Psoas muscle (tissue), 8 donors: ENCODE measurements at regions of chr17 and their contacts with region 1.

Region 1: GRCh38 chr17:47188876-47189731 is at the start of gene CDC27:
- DNase-seq: peak; percentile 98 to 99
- ATAC-seq: peak; percentile 95 to 97 (median 95)
- H3K4me3 ChIP-seq: peak within 1 kb of the TSS; percentile 72
- H3K27ac ChIP-seq: peak within 1 kb of the TSS; percentile 94
- H3K4me1 ChIP-seq: peaks cover 27% of the 10 kb centered on the region
- H3K27me3 ChIP-seq: no peaks in the 10 kb centered on the region
- CTCF ChIP-seq: no peak
- total RNA-seq, gene CDC27: 72.5 to 78.4 (median 74.9) TPM

Region 2: DNA sequence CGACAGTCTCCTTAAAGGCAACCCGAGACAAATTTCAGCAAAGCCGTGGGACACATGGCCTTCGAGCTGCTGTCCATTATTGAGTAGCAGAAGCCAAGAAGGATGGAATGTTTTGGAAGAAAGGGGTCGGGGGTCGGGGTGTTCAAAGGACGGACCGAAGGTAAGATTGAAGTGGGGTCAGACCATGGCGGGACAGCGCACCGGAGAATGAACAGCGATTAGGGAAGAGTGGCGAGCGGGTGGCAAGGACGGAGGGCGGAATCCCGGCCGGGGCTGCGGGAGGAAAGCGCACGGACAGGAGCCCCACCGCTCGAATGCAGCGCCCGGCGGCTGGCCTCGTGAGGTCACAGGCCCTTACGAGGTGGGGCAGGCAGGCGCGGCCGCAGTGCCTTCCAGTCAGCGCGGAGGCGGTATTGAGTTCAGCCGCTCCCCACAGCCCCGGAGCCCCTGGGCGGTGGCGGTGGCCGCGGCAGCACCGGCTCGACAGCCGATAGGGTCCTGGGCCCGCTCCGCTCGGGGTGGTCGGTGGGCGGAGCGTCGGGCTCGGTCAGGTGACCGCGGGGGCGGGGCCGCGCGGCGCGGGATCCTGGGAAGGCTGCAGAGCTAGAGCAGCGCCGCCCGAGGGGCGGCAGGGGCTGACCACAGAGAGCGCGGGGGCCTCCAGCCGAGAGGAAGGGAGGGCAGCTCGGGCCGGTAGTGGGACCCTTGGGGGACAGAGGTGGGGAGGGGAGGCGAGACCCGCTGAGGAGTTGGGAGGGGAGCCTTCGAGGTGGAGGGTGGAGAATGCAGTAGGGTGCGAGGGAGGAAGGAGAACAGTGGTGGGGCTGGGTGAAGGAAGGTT is 134.5 kb after region 1 on chr17 and contains the start of gene EFCAB13:
- intact Hi-C with region 1: loop called in 1 of 2 experiments (anchors 5 kb)
- DNase-seq: peak; percentile 91 to 94
- ATAC-seq: peak; percentile 88 to 97 (median 96)
- H3K4me3 ChIP-seq: peak within 1 kb of the TSS; percentile 64
- H3K27ac ChIP-seq: peak within 1 kb of the TSS; percentile 64
- H3K4me1 ChIP-seq: no peaks in the 10 kb centered on the region
- H3K27me3 ChIP-seq: peaks cover 0 to 23% (median 0%) of the 10 kb centered on the region in 3 donors
- CTCF ChIP-seq: no peak
- total RNA-seq, gene EFCAB13: 0.37 to 2.2 (median 0.83) TPM